Calu3 (cell line): ENCODE measurements at regions of chrX and their contacts with region 1.

Region 1: DNA sequence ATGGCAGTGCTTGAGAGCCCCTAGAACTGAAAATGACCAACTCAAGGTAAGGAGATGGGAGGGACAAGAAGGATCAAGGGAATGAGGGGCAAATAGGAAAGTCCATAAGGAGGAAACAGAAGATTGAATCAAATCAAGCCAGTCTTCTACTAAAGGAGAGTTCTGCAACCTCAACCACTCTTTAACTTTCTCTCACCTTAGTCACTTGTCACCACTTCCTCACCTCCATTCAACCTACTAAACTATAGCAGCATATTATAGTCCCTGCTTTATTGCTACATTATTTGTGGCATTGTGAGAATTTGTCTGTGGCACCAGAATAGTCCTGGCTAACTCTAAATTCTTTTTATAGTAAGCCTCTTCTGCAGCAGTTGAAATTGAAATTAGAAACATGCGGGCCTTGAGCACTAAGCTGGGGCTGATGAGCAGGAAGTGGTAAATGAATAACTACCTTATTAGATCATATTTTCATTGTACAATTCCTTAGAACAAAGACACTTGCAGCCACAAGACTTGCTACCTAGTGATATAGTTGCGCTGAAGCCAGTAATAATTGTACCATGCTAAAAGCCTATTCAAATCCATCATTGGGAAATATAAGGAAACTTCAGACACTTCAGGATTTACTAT is 336.9 kb downstream of the ZNF674 start:
- DNase-seq: peak; percentile 8
- H3K4me3 Mint-ChIP-seq: no peak overlapping the region
- H3K27ac Mint-ChIP-seq: peak overlapping the region; percentile 63
- H3K4me1 Mint-ChIP-seq: peaks cover 51% of the 10 kb centered on the region
- H3K27me3 Mint-ChIP-seq: no peaks in the 10 kb centered on the region
- CTCF ChIP-seq: no peak

Region 2: DNA sequence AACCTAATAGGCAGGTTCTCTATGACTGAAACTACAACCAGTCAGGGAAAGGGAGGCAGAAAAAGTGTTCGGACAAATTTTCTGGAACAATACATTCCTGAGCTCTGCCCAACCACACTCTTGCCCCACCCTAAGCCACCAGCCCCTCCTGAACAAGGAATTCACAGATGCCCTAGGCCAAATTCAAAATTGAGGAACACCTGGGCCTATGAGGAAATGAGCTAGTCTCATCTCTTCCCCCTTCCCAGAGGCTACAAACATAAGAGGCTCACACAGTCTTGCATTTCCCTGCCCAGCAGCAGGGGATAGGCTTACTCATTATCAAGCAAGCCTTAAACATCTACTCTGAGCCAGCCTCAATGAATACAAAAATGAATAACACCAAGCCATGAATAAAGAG is 52.2 kb after region 1 on chrX:
- CTCF ChIA-PET with region 1: interaction called, 4 read pairs
- intact Hi-C with region 1: loop called (anchors 5 kb)
- DNase-seq: peak; percentile 55
- H3K4me3 Mint-ChIP-seq: no peak overlapping the region
- H3K27ac Mint-ChIP-seq: peak overlapping the region; percentile 88
- H3K4me1 Mint-ChIP-seq: peaks cover 81% of the 10 kb centered on the region
- H3K27me3 Mint-ChIP-seq: no peaks in the 10 kb centered on the region
- CTCF ChIP-seq: no peak